H1 (cell line): ENCODE measurements at regions of chr6 and their contacts with region 1.

Region 1: DNA sequence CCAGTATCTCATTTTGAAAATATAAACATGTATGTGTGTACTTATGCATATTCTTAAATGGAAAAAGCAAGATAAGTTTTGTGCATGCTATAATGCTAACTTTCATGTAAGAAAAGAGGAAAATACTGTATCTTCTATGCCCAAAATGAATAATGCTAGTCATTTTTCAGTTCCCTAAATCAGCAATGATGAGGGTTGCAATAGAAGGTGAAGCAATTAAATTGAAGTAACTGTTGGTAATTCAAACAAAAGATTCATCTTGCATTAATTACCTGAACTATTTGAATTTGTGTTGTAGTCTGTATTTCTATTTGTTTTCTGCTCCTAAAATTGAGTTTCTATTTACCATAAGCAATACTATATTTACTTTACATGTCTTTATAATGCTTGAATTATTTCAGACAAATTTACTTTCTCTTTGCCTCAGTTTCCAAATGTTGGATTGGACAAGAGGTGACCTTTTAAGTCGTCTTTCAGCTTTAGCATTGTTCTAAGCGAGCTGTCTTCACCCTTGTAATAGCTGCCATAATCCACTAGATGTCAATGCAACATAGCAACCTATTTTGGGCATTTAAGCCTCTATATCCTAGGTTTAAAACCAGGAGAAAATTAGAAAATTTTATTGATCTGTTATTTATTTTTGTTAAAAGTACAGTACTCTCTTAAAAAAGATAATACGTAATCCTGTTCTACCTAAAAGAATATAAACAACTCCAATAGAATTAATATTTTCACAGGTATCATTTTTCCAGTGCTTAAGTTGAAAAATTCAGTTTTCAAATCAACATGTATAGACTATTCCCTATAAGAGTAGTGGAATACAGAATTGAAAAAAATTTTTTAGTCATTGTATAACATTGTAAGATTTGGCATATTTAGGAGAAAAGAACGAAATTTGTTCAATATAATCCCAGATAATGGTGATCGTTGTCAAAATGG is 52.3 kb upstream of the IFNGR1 start:
- DNase-seq: no peak
- H3K4me3 ChIP-seq: no peak overlapping the region
- H3K27ac ChIP-seq: no peak overlapping the region
- H3K4me1 ChIP-seq: no peaks in the 10 kb centered on the region
- H3K27me3 ChIP-seq: no peaks in the 10 kb centered on the region
- CTCF ChIP-seq: peak in 2 of 3 experiments; percentile 75 to 78; a peak in 3 of 4 replicates
- EP300 ChIP-seq: no peak
- POLR2A ChIP-seq: no peak
- RAD21 ChIP-seq: peak; percentile 95 to 96

Region 2: GRCh38 chr6:137202078-137202477 is 69.4 kb before region 1 on chr6:
- CTCF ChIA-PET with region 1: no interaction called
- POLR2A ChIA-PET with region 1: no interaction called
- DNase-seq: no peak
- H3K4me3 ChIP-seq: no peak overlapping the region
- H3K27ac ChIP-seq: no peak overlapping the region
- H3K4me1 ChIP-seq: no peaks in the 10 kb centered on the region
- H3K27me3 ChIP-seq: no peaks in the 10 kb centered on the region
- CTCF ChIP-seq: peak; percentile 18 to 32 (median 21); a peak in 2 of 4 replicates
- EP300 ChIP-seq: no peak
- POLR2A ChIP-seq: no peak
- RAD21 ChIP-seq: peak; percentile 36 to 42; a peak in 2 of 4 replicates

Region 3: GRCh38 chr6:137291441-137291840 is 19.9 kb after region 1 on chr6:
- CTCF ChIA-PET with region 1: interaction called, 13 read pairs
- POLR2A ChIA-PET with region 1: no interaction called
- DNase-seq: no peak
- H3K4me3 ChIP-seq: no peak overlapping the region
- H3K27ac ChIP-seq: no peak overlapping the region
- H3K4me1 ChIP-seq: peaks cover 0 to 8% (median 5%) of the 10 kb centered on the region in 4 experiments; a peak in 3 of 7 replicates
- H3K27me3 ChIP-seq: no peaks in the 10 kb centered on the region
- CTCF ChIP-seq: no peak
- EP300 ChIP-seq: no peak
- POLR2A ChIP-seq: no peak
- RAD21 ChIP-seq: no peak